CD14-positive monocyte (primary cell): ENCODE measurements at regions of chr13 and their contacts with region 1.

Region 1: DNA sequence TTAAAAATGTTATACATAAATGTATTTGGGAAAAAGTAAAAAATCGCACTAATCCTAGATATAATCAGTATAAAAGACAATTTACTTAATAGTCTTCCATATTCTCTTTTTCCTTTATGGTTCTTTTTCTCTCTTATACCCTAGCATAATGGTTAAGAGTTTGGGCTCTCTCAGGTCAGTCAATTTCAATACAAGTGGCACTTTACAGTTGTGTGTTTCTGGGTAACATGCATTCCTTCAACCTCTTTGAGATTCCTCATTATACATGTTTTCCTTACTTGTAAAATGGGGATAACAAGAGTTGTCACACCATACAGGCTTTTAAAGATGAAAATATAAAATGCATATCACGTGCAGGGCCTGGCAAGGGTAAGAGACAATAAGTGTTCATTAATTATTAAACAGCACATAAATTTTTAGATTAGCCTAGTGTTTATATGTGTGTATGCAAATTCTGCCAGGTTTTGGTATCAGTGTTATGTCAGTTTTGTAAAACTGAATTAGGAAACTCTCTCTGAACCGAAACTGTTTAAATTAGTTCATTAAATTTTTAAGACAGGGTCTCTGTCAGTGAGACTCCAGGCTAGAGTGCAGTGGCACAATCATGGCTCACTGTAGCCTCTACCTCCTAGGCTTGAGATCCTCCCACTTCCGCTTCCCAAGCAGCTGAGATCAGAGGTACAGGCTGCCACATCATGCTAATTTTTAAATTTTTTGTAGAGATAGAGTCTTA is 49.8 kb downstream of the ELF1 start:
- DNase-seq: peak; percentile 52 to 80 (median 77)
- H3K4me3 ChIP-seq: peak overlapping the region in 1 of 3 experiments; percentile 69
- H3K4me3 Mint-ChIP-seq: peak overlapping the region; percentile 13 to 31
- H3K27ac ChIP-seq: peak overlapping the region; percentile 44 to 71
- H3K27ac Mint-ChIP-seq: peak overlapping the region; percentile 68 to 91 (median 86)
- H3K4me1 ChIP-seq: peaks cover 75 to 99% of the 10 kb centered on the region in 2 donors
- H3K4me1 Mint-ChIP-seq: peaks cover 93% of the 10 kb centered on the region
- H3K27me3 ChIP-seq: no peaks in the 10 kb centered on the region
- H3K27me3 Mint-ChIP-seq: no peaks in the 10 kb centered on the region
- CTCF ChIP-seq: no peak

Region 2: GRCh38 chr13:40933508-40934204 is 35.7 kb before region 1 on chr13:
- intact Hi-C with region 1: no loop called
- DNase-seq: peak in 1 of 3 donors; percentile 12
- H3K4me3 ChIP-seq: no peak overlapping the region
- H3K4me3 Mint-ChIP-seq: no peak overlapping the region
- H3K27ac ChIP-seq: peak overlapping the region in 1 of 2 donors; percentile 56
- H3K27ac Mint-ChIP-seq: peak overlapping the region in 6 of 7 donors; percentile 23 to 86 (median 54)
- H3K4me1 ChIP-seq: peaks cover 0 to 5% of the 10 kb centered on the region in 2 donors
- H3K4me1 Mint-ChIP-seq: peaks cover 9% of the 10 kb centered on the region
- H3K27me3 ChIP-seq: no peaks in the 10 kb centered on the region
- H3K27me3 Mint-ChIP-seq: no peaks in the 10 kb centered on the region
- CTCF ChIP-seq: no peak

Region 3: DNA sequence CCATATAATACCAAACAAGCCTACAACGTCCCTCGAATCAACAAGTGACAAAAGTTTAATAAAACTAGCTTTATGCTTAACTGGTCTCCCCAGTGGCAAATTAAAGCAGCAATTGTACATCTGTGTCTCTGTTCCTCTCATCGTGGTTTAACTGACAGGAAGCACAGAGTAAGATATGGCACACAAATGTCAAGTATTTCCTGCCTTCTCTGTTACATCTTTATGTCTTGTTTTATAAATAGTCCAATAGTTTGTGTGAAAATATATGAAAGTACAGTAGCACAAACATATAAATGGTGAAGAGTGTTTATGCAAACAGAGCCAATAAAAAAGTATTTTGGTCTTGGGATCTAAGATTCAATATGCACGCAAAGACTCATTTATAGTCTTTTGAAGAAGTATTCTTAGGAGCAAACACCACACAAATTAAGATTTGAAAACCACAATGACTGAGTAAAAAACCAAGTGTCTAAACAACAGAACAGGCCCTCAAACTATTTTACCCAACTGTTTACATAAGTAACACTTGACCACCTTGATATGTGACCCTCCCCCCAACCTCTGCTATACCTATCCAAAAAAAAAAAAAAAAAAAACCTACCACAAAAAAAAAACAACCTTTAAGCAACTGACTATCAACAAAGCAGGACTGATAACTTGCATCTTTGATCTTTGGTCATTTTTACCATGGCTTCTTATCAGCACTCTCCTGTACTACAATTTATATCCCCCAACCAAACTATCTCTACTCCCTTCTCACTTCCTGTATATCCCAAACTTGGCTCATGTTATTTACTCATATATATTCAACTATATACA is 35.7 kb after region 1 on chr13:
- intact Hi-C with region 1: loop called in 1 of 2 experiments (anchors 5 kb)
- DNase-seq: peak in 1 of 3 donors; percentile 44
- H3K4me3 ChIP-seq: peak overlapping the region in 2 of 3 experiments; percentile 12 to 47
- H3K4me3 Mint-ChIP-seq: peak overlapping the region; percentile 60 to 69
- H3K27ac ChIP-seq: peak overlapping the region in 1 of 2 donors; percentile 81
- H3K27ac Mint-ChIP-seq: peak overlapping the region; percentile 86 to 93 (median 91)
- H3K4me1 ChIP-seq: peaks cover 60 to 89% of the 10 kb centered on the region in 2 donors
- H3K4me1 Mint-ChIP-seq: peaks cover 66% of the 10 kb centered on the region
- H3K27me3 ChIP-seq: no peaks in the 10 kb centered on the region
- H3K27me3 Mint-ChIP-seq: no peaks in the 10 kb centered on the region
- CTCF ChIP-seq: no peak